Activated naive CD4-positive, alpha-beta T cell treated with anti-CD3 and anti-CD28 coated beads for 36 hours (primary cell): ENCODE measurements at regions of chr11 and their contacts with region 1.

Region 1: GRCh38 chr11:117226388-117227385 is 5.2 kb downstream of the PCSK7 start:
- DNase-seq: peak; percentile 53
- H3K4me3 Mint-ChIP-seq: no peak overlapping the region
- H3K27ac Mint-ChIP-seq: no peak overlapping the region
- H3K4me1 Mint-ChIP-seq: peaks cover 31% of the 10 kb centered on the region
- H3K27me3 Mint-ChIP-seq: no peaks in the 10 kb centered on the region

Region 2: GRCh38 chr11:116732271-116733042 is 494.2 kb before region 1 on chr11:
- CTCF ChIA-PET with region 1: interaction called, 4 read pairs
- intact Hi-C with region 1: loop called (anchors 2 kb)
- DNase-seq: peak; percentile 77
- H3K4me3 Mint-ChIP-seq: no peak overlapping the region
- H3K27ac Mint-ChIP-seq: no peak overlapping the region
- H3K4me1 Mint-ChIP-seq: peaks cover 10% of the 10 kb centered on the region
- H3K27me3 Mint-ChIP-seq: no peaks in the 10 kb centered on the region

Region 3: GRCh38 chr11:116835791-116836631 is 390.7 kb before region 1 on chr11:
- CTCF ChIA-PET with region 1: interaction called, 11 read pairs
- intact Hi-C with region 1: no loop called
- DNase-seq: peak; percentile 86
- H3K4me3 Mint-ChIP-seq: peak overlapping the region; percentile 69
- H3K27ac Mint-ChIP-seq: no peak overlapping the region
- H3K4me1 Mint-ChIP-seq: peaks cover 8% of the 10 kb centered on the region
- H3K27me3 Mint-ChIP-seq: peaks cover 4% of the 10 kb centered on the region

Region 4: GRCh38 chr11:116879800-116880625 is 346.7 kb before region 1 on chr11:
- CTCF ChIA-PET with region 1: no interaction called
- intact Hi-C with region 1: loop called (anchors 2 kb)
- DNase-seq: peak; percentile 33
- H3K4me3 Mint-ChIP-seq: no peak overlapping the region
- H3K27ac Mint-ChIP-seq: no peak overlapping the region
- H3K4me1 Mint-ChIP-seq: peaks cover 23% of the 10 kb centered on the region
- H3K27me3 Mint-ChIP-seq: no peaks in the 10 kb centered on the region

Region 5: GRCh38 chr11:117178210-117179034 is 48.3 kb before region 1 on chr11 and contains the start of gene SIDT2:
- CTCF ChIA-PET with region 1: interaction called, 72 read pairs
- intact Hi-C with region 1: loop called (anchors 1 kb)
- DNase-seq: peak; percentile 92
- H3K4me3 Mint-ChIP-seq: peak within 1 kb of the TSS; percentile 93
- H3K27ac Mint-ChIP-seq: peak within 1 kb of the TSS; percentile 79
- H3K4me1 Mint-ChIP-seq: peaks cover 28% of the 10 kb centered on the region
- H3K27me3 Mint-ChIP-seq: no peaks in the 10 kb centered on the region
- total RNA-seq, gene SIDT2: 23.9 to 25.6 TPM

Region 6: GRCh38 chr11:117313091-117313490 is 86.4 kb after region 1 on chr11:
- CTCF ChIA-PET with region 1: no interaction called
- intact Hi-C with region 1: no loop called
- DNase-seq: no peak
- H3K4me3 Mint-ChIP-seq: no peak overlapping the region
- H3K27ac Mint-ChIP-seq: no peak overlapping the region
- H3K4me1 Mint-ChIP-seq: peaks cover 6% of the 10 kb centered on the region
- H3K27me3 Mint-ChIP-seq: peaks cover 34% of the 10 kb centered on the region